ENCODE measurements at regions of chr1 and their contacts with region 1.

Region 1: GRCh38 chr1:85576642-85577418 is 3.7 kb upstream of the CCN1 start:
- DNase-seq: peak; percentile 66 to 78
- ATAC-seq: peak; percentile 44 to 63
- H3K4me3 ChIP-seq: peak overlapping the region; percentile 72 to 90 (median 80)
- H3K27ac ChIP-seq: peak overlapping the region; percentile 91 to 97 (median 94)
- H3K4me1 ChIP-seq: peaks cover 7 to 29% of the 10 kb centered on the region in 2 donors
- H3K27me3 ChIP-seq: no peaks in the 10 kb centered on the region
- CTCF ChIP-seq: peak; percentile 64 to 94 (median 86)
- POLR2A ChIP-seq: peak; percentile 73 to 83

Region 2: GRCh38 chr1:84506002-84506728 is 1070.7 kb before region 1 on chr1 and contains the starts of genes GNG5 and SPATA1:
- in situ Hi-C with region 1: no loop called
- intact Hi-C with region 1: loop called (anchors 10 kb)
- DNase-seq: peak; percentile 97 to 98
- ATAC-seq: peak; percentile 86 to 91
- H3K4me3 ChIP-seq: peak within 1 kb of the TSS; percentile 77 to 92 (median 81)
- H3K27ac ChIP-seq: peak within 1 kb of the TSS; percentile 96 to 97 (median 96)
- H3K4me1 ChIP-seq: peaks cover 34% of the 10 kb centered on the region in 2 donors
- H3K27me3 ChIP-seq: no peaks in the 10 kb centered on the region
- CTCF ChIP-seq: no peak
- POLR2A ChIP-seq: peak; percentile 88 to 93
- total RNA-seq, gene GNG5: 122 to 168 (median 128) TPM
- total RNA-seq, gene SPATA1: 0.35 TPM in 1 of 4 donors, not detected in the others

Region 3: DNA sequence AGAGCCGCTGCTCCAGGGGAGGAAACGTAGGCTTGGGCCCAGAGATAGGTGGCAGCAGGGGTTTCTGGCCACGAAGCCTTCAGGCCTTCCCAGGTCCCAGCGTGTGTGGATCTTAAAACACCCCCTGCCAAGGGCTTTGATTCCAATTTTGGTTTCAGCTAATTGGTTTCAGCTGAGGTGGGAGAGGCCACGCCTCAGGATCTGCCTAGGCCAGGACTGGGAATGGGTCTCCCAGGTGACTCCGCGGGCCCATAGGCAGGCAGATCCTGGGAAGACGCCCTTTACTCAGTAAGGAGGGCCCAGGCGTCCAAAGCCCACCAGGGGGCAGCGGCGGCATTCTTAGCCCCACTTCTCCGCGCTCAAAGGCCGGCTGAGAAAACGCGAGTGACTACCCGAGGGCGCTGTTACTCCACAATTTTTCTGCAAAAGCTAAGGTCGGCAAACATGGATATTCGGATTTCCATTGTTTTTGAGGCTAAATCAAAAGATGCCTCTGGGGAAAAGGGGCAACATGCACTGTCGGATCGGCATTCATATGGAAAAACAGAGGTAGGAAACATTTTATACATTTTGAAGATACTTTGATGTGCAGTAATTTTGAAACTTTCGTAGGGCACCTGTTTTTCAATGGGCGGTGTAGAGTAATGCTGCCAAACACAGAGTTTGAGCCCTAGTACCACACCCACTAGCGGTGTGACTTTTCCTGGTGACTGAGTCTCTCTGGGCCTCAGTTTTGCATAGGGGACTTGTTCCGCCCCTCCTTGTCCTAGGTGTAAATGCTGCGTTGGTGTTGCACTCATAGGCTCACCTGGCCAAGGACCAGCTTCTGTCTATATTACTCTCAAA is 268.6 kb before region 1 on chr1:
- in situ Hi-C with region 1: loop called (anchors 10 kb)
- intact Hi-C with region 1: no loop called
- DNase-seq: peak; percentile 68 to 78
- ATAC-seq: peak; percentile 93 to 99
- H3K4me3 ChIP-seq: peak overlapping the region in 2 of 4 donors; percentile 10 to 48
- H3K27ac ChIP-seq: no peak overlapping the region
- H3K4me1 ChIP-seq: peaks cover 7 to 16% of the 10 kb centered on the region in 2 donors
- H3K27me3 ChIP-seq: no peaks in the 10 kb centered on the region
- CTCF ChIP-seq: peak; percentile 92 to 99 (median 95)
- POLR2A ChIP-seq: no peak

Region 4: DNA sequence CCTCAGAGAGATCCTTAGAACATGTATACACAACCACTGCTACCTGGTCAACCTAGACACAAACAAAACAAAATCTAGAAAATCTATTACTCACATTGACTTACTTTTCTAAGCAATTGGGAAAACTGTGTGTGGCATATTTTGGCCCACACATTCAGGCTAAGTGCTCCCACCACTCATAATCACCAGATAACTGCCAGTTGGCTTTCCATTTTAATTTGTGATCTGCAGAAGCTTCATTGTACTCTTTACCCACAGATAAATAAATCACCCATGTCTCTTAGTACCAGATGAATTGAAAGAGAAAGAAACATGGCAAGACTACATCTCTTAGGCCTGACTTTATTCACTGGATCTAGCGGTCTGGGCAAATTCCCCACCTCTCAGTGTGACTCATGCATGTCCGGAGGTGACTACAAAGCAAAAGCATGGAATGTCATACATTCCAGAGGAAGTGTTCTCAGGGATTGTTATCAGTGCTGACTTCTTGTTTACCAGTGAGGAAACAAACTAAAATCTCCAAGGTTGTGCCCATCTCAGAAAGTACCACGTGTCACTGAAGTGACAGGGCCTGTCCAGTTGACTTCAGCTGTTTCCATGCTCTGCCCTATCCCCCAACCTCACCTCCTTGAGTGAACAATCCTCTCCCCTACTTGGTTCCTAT is 248.0 kb before region 1 on chr1:
- in situ Hi-C with region 1: loop called in 1 of 4 experiments (anchors 10 kb)
- intact Hi-C with region 1: no loop called
- DNase-seq: no peak
- ATAC-seq: peak; percentile 40
- H3K4me3 ChIP-seq: no peak overlapping the region
- H3K27ac ChIP-seq: peak overlapping the region; percentile 15 to 77 (median 62)
- H3K4me1 ChIP-seq: peaks cover 25 to 31% of the 10 kb centered on the region in 2 donors
- H3K27me3 ChIP-seq: no peaks in the 10 kb centered on the region
- CTCF ChIP-seq: no peak
- POLR2A ChIP-seq: no peak

Region 5: GRCh38 chr1:85406887-85407533 is 169.8 kb before region 1 on chr1:
- in situ Hi-C with region 1: no loop called
- intact Hi-C with region 1: loop called (anchors 5 kb)
- DNase-seq: no peak
- ATAC-seq: peak; percentile 82 to 87
- H3K4me3 ChIP-seq: no peak overlapping the region
- H3K27ac ChIP-seq: peak overlapping the region; percentile 9 to 59 (median 34)
- H3K4me1 ChIP-seq: peaks cover 21 to 23% of the 10 kb centered on the region in 2 donors
- H3K27me3 ChIP-seq: no peaks in the 10 kb centered on the region
- CTCF ChIP-seq: no peak
- POLR2A ChIP-seq: no peak

Region 6: GRCh38 chr1:85494904-85495266 is 81.9 kb before region 1 on chr1:
- in situ Hi-C with region 1: no loop called
- intact Hi-C with region 1: loop called (anchors 2 kb)
- DNase-seq: no peak
- ATAC-seq: peak in 1 of 2 donors; percentile 50
- H3K4me3 ChIP-seq: no peak overlapping the region
- H3K27ac ChIP-seq: no peak overlapping the region
- H3K4me1 ChIP-seq: peaks cover 12 to 14% of the 10 kb centered on the region in 2 donors
- H3K27me3 ChIP-seq: no peaks in the 10 kb centered on the region
- CTCF ChIP-seq: peak in 3 of 5 experiments; percentile 22 to 53 (median 34)
- POLR2A ChIP-seq: no peak

Region 7: DNA sequence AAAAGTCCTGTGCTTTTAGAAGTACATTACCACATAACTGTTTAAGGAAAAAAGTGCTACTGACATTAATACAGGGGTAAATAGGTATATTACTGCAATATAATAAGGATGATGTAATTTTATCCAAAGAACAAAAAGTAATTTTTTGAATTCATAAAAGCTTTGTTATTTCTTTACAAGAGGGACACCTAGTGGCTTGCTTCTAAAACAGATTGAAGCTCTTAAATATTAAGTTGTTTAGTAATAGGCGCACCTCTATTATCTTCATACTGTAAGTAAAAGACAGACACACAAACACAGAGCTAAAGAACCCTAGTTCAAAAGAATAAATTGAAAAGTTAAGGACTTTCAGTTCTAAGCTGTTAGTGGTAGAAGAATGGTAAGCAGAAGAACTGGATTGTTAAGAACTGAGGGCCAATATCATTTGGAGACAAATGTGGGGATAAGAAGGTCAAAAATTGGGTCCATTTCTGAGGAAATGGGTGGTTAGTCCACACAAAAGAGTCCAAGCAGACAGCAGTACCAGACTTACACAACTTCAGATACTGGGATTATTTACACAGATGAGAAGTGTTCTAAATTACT is 116.0 kb after region 1 on chr1:
- in situ Hi-C with region 1: loop called in 1 of 4 experiments (anchors 10 kb)
- intact Hi-C with region 1: no loop called
- DNase-seq: no peak
- ATAC-seq: no peak
- H3K4me3 ChIP-seq: no peak overlapping the region
- H3K27ac ChIP-seq: no peak overlapping the region
- H3K4me1 ChIP-seq: peaks cover 5 to 6% of the 10 kb centered on the region in 2 donors
- H3K27me3 ChIP-seq: no peaks in the 10 kb centered on the region
- CTCF ChIP-seq: peak in 4 of 5 experiments; percentile 18 to 49 (median 30)
- POLR2A ChIP-seq: no peak

Region 8: DNA sequence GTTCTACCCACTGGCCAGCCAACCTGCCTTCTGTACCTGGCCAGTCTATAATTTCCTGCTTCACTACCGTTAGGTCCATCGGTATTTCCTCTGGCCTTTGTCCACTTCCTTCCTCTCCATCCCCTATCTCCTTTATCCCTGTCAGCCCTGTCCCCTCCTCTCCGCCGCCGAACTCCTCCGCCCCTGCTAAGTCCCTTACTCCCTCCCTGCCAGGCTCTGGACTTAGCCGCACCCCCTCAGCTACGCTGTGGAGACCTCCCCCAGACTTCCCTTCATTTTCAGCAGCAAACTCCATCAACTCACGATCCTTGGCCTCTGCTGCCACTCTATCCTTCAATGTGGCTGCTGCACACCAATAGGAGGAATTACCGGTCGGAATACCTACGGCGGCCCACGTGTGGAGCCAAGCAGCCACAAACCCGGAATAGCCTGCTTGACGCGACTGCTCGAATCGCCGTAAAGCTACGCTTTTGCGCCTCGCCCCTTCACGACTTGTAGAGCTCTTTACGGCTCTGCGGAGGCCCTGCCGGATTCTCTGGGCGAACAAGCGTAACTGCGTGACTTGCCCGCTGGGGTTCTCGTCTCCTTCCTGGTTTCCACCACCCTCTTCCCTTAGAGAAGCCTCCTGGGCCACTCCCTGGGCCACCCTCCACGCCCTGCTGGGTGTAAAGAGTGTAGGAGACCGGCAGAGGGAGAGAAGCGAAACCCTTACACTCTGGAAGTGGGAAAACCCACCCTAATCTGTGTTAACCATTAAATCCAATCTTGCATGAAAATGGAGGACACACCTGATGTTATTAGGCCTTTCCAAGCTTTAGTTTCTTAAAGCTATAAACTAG is 131.4 kb after region 1 on chr1 and contains the start of gene ZNHIT6:
- in situ Hi-C with region 1: no loop called
- intact Hi-C with region 1: no loop called
- DNase-seq: peak; percentile 81 to 91
- ATAC-seq: peak; percentile 98
- H3K4me3 ChIP-seq: peak within 1 kb of the TSS; percentile 63 to 92 (median 78)
- H3K27ac ChIP-seq: peak within 1 kb of the TSS; percentile 80 to 91 (median 88)
- H3K4me1 ChIP-seq: peaks cover 11 to 19% of the 10 kb centered on the region in 2 donors
- H3K27me3 ChIP-seq: no peaks in the 10 kb centered on the region
- CTCF ChIP-seq: peak; percentile 14 to 43 (median 16)
- POLR2A ChIP-seq: peak in 1 of 2 donors; percentile 9
- total RNA-seq, gene ZNHIT6: 6.6 to 11.4 (median 7.8) TPM